MCF 10A (cell line): ENCODE measurements at regions of chr6 and their contacts with region 1.

Region 1: GRCh38 chr6:107114213-107114905 is 956 bp downstream of the BEND3 start:
- DNase-seq: peak; percentile 86
- H3K4me3 Mint-ChIP-seq: peak overlapping the region; percentile 71
- H3K27ac Mint-ChIP-seq: no peak overlapping the region
- H3K4me1 Mint-ChIP-seq: no peaks in the 10 kb centered on the region
- H3K27me3 Mint-ChIP-seq: no peaks in the 10 kb centered on the region
- CTCF ChIP-seq: peak; percentile 91

Region 2: DNA sequence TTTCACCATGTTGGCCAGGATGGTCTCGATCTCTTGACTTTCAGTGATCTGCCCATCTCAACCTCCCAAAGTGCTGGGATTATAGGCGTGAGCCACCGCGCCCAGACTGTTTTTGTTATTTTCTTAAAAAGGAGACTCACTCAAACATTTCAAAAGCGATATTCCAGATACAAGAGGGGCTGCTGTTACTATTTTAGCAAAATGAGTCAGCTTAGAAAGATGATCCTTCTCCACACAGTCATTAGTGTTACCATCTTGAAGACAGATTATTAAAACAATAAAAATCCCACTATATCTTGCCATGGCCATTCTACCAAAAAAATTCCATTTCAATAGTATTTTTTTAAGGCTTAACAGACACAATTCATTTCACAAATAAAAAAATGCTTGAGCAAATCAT is 1814.3 kb before region 1 on chr6:
- CTCF ChIA-PET with region 1: no interaction called
- POLR2A ChIA-PET with region 1: no interaction called
- intact Hi-C with region 1: no loop called
- DNase-seq: no peak
- H3K4me3 Mint-ChIP-seq: no peak overlapping the region
- H3K27ac Mint-ChIP-seq: no peak overlapping the region
- H3K4me1 Mint-ChIP-seq: no peaks in the 10 kb centered on the region
- H3K27me3 Mint-ChIP-seq: no peaks in the 10 kb centered on the region
- CTCF ChIP-seq: no peak

Region 3: GRCh38 chr6:106339334-106340029 is 774.9 kb before region 1 on chr6:
- CTCF ChIA-PET with region 1: interaction called, 3 read pairs
- POLR2A ChIA-PET with region 1: interaction called, 3 read pairs
- intact Hi-C with region 1: loop called (anchors 5 kb)
- DNase-seq: peak; percentile 87
- H3K4me3 Mint-ChIP-seq: peak overlapping the region; percentile 61
- H3K27ac Mint-ChIP-seq: peak overlapping the region; percentile 43
- H3K4me1 Mint-ChIP-seq: peaks cover 11% of the 10 kb centered on the region
- H3K27me3 Mint-ChIP-seq: no peaks in the 10 kb centered on the region
- CTCF ChIP-seq: peak; percentile 68

Region 4: GRCh38 chr6:106381871-106382270 is 732.5 kb before region 1 on chr6:
- CTCF ChIA-PET with region 1: no interaction called
- POLR2A ChIA-PET with region 1: no interaction called
- intact Hi-C with region 1: no loop called
- DNase-seq: peak; percentile 84
- H3K4me3 Mint-ChIP-seq: no peak overlapping the region
- H3K27ac Mint-ChIP-seq: peak overlapping the region; percentile 63
- H3K4me1 Mint-ChIP-seq: peaks cover 32% of the 10 kb centered on the region
- H3K27me3 Mint-ChIP-seq: no peaks in the 10 kb centered on the region
- CTCF ChIP-seq: no peak

Region 5: DNA sequence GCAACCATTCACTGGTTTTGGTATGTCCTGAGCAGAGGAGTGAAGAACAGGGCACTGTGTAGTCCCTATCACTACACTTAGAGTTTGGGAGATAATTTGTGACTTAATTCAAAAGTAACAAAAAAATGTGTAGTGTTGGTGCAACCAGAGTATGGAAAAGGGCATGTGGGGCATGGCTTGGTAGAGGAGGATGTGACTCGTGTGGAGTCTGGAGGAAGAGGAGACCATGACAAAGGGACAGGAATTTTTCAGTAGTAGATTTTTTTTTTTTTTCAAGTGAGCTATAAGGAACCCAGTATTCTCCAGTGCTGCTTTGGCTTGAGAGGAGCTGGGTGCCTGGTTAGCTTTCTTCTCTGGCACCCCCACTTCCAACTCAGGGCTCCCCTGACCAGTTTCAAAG is 81.2 kb before region 1 on chr6:
- CTCF ChIA-PET with region 1: interaction called, 8 read pairs
- POLR2A ChIA-PET with region 1: interaction called, 8 read pairs
- intact Hi-C with region 1: loop called (anchors 1 kb)
- DNase-seq: no peak
- H3K4me3 Mint-ChIP-seq: no peak overlapping the region
- H3K27ac Mint-ChIP-seq: no peak overlapping the region
- H3K4me1 Mint-ChIP-seq: peaks cover 15% of the 10 kb centered on the region
- H3K27me3 Mint-ChIP-seq: no peaks in the 10 kb centered on the region
- CTCF ChIP-seq: no peak

Region 6: GRCh38 chr6:107066697-107067659 is 47.4 kb before region 1 on chr6:
- CTCF ChIA-PET with region 1: no interaction called
- POLR2A ChIA-PET with region 1: no interaction called
- intact Hi-C with region 1: no loop called
- DNase-seq: no peak
- H3K4me3 Mint-ChIP-seq: no peak overlapping the region
- H3K27ac Mint-ChIP-seq: no peak overlapping the region
- H3K4me1 Mint-ChIP-seq: peaks cover 9% of the 10 kb centered on the region
- H3K27me3 Mint-ChIP-seq: no peaks in the 10 kb centered on the region
- CTCF ChIP-seq: no peak

Region 7: DNA sequence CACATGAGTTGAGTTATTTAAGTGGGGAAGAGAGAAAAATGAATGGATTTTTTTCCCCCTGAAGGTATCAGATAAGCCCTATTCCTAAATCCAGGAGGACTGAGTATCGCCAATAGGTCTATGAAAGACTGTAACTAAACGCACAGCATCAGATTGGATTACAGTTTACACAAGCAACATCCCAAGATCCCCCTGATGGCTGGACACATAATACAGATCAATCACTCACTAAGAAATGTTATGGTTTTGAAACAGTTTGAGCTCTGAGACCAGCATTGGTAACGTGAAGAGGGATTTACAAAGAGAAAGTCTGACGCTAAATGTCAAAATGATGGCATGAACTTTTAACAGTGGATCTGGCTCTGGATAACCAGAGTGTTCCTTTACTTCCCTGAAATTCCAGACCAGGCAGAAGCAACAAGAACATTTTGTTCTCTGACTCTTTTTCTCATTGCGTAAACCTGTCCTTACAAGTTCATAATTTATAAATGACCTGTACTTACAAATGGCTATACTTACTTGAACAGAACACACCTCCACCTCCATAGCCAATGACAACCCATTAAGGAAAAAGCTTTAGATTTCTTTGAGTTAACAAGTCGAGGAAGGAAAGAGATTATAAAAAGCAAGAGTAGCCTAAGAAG is 132.7 kb after region 1 on chr6:
- CTCF ChIA-PET with region 1: no interaction called
- POLR2A ChIA-PET with region 1: interaction called, 8 read pairs
- intact Hi-C with region 1: loop called (anchors 10 kb)
- DNase-seq: peak; percentile 93
- H3K4me3 Mint-ChIP-seq: peak overlapping the region; percentile 65
- H3K27ac Mint-ChIP-seq: peak overlapping the region; percentile 95
- H3K4me1 Mint-ChIP-seq: peaks cover 25% of the 10 kb centered on the region
- H3K27me3 Mint-ChIP-seq: no peaks in the 10 kb centered on the region
- CTCF ChIP-seq: no peak